ENCODE measurements at regions of chr2 and their contacts with region 1.

Region 1: DNA sequence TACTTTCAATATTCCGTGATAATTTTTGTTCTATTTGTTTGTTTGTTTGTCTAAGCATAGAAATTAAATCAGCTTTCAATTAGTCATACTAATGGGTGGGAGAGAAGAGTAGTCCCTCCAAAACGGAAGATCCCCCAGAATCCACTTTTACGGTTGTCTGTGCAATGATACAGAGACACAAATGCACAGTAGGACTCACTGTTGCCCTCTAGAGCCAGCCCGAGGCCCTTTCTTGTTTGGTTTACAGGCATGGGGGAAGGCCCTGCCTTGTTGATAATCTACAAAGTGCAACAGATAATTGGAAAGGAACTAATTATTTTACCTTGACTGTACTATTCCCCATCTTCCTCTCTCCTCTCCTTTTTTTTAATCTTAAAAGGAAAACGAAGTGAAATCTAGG is 121.1 kb downstream of the ACOXL start:
- DNase-seq: peak in 7 of 9 experiments; percentile 37 to 84 (median 67)
- ATAC-seq: no peak
- H3K4me3 ChIP-seq: no peak overlapping the region
- H3K4me3 Mint-ChIP-seq: peak overlapping the region; percentile 12
- H3K27ac ChIP-seq: no peak overlapping the region
- H3K27ac Mint-ChIP-seq: peak overlapping the region; percentile 87
- H3K4me1 ChIP-seq: peaks cover 44% of the 10 kb centered on the region
- H3K4me1 Mint-ChIP-seq: peaks cover 64% of the 10 kb centered on the region
- H3K27me3 ChIP-seq: no peaks in the 10 kb centered on the region
- H3K27me3 Mint-ChIP-seq: no peaks in the 10 kb centered on the region
- CTCF ChIP-seq: peak; percentile 67

Region 2: GRCh38 chr2:110677530-110678456 is 175.7 kb before region 1 on chr2 and contains the start of gene BUB1:
- CTCF ChIA-PET with region 1: no interaction called
- POLR2A ChIA-PET with region 1: no interaction called
- intact Hi-C with region 1: loop called (anchors 10 kb)
- DNase-seq: peak; percentile 87 to 98 (median 95)
- ATAC-seq: peak; percentile 95
- H3K4me3 ChIP-seq: peak within 1 kb of the TSS; percentile 65 to 91
- H3K4me3 Mint-ChIP-seq: peak within 1 kb of the TSS; percentile 96
- H3K27ac ChIP-seq: peak within 1 kb of the TSS; percentile 66 to 67
- H3K27ac Mint-ChIP-seq: peak within 1 kb of the TSS; percentile 93
- H3K4me1 ChIP-seq: peaks cover 13% of the 10 kb centered on the region
- H3K4me1 Mint-ChIP-seq: peaks cover 27% of the 10 kb centered on the region
- H3K27me3 ChIP-seq: peaks cover 0 to 2% of the 10 kb centered on the region in 2 experiments
- H3K27me3 Mint-ChIP-seq: no peaks in the 10 kb centered on the region
- CTCF ChIP-seq: no peak
- total RNA-seq, gene BUB1: 2.4 to 3.1 TPM

Region 3: DNA sequence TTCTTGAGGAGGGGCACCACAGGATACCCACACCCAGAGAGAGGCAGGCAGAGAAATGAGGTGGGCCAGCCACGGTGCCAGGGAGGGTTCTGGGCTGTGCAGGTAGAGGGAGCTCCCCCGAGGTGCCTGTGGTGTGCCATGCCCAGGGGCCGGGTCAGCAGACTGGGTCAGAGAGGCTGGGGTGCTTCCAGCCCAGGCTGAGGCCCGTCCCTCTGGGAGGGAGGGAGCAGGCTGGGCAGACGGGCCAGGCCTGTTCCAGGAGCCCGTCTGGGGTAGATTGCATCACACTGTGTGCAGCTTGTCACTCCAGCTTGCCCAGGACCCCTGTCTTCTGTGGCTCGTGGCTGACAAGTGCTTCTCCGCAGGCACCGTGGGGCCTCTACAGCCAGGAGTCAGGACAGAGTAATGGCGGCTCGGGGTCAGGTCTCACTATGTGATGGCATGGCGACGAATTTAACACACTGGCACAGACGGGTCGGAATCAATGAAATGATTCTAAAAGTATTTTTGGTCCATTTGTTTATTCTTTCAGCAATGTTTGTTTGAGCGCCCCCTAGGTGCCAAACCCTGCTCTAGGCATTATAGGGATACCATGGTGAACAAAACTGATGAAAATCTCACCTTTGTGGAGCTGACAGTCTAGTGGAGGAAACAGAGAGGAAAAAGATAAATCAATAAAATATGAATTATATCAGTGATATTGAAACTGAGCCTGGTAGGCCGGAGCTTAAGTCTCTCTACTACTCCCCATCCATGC is 22.9 kb after region 1 on chr2:
- CTCF ChIA-PET with region 1: interaction called, 9 read pairs
- POLR2A ChIA-PET with region 1: interaction called, 14 read pairs
- intact Hi-C with region 1: no loop called
- DNase-seq: peak in 1 of 9 experiments; percentile 30
- ATAC-seq: no peak
- H3K4me3 ChIP-seq: no peak overlapping the region
- H3K4me3 Mint-ChIP-seq: peak overlapping the region; percentile 74
- H3K27ac ChIP-seq: no peak overlapping the region
- H3K27ac Mint-ChIP-seq: peak overlapping the region; percentile 77
- H3K4me1 ChIP-seq: peaks cover 33% of the 10 kb centered on the region
- H3K4me1 Mint-ChIP-seq: peaks cover 29% of the 10 kb centered on the region
- H3K27me3 ChIP-seq: no peaks in the 10 kb centered on the region
- H3K27me3 Mint-ChIP-seq: no peaks in the 10 kb centered on the region
- CTCF ChIP-seq: no peak

Region 4: GRCh38 chr2:111975053-111975552 is 1121.6 kb after region 1 on chr2:
- CTCF ChIA-PET with region 1: no interaction called
- POLR2A ChIA-PET with region 1: no interaction called
- intact Hi-C with region 1: no loop called
- DNase-seq: no peak
- ATAC-seq: no peak
- H3K4me3 ChIP-seq: no peak overlapping the region
- H3K4me3 Mint-ChIP-seq: no peak overlapping the region
- H3K27ac ChIP-seq: no peak overlapping the region
- H3K27ac Mint-ChIP-seq: no peak overlapping the region
- H3K4me1 ChIP-seq: no peaks in the 10 kb centered on the region
- H3K4me1 Mint-ChIP-seq: no peaks in the 10 kb centered on the region
- H3K27me3 ChIP-seq: no peaks in the 10 kb centered on the region
- H3K27me3 Mint-ChIP-seq: peaks cover 13% of the 10 kb centered on the region
- CTCF ChIP-seq: no peak

Measured in CD8-positive, alpha-beta T cell (primary cell).